HCT116 (cell line): ENCODE measurements at regions of chr16 and their contacts with region 1.

Region 1: GRCh38 chr16:72832621-72833248 is 215.2 kb downstream of the ZFHX3 start:
- DNase-seq: no peak
- ATAC-seq: peak; percentile 94
- H3K4me3 ChIP-seq: no peak overlapping the region
- H3K27ac ChIP-seq: no peak overlapping the region
- H3K4me1 ChIP-seq: peaks cover 0 to 4% of the 10 kb centered on the region in 2 experiments; a peak in 1 of 4 replicates
- H3K27me3 ChIP-seq: no peaks in the 10 kb centered on the region
- CTCF ChIP-seq: peak; percentile 76 to 99 (median 99); a peak in 5 of 6 replicates
- POLR2A ChIP-seq: no peak
- RAD21 ChIP-seq: peak; percentile 95

Region 2: DNA sequence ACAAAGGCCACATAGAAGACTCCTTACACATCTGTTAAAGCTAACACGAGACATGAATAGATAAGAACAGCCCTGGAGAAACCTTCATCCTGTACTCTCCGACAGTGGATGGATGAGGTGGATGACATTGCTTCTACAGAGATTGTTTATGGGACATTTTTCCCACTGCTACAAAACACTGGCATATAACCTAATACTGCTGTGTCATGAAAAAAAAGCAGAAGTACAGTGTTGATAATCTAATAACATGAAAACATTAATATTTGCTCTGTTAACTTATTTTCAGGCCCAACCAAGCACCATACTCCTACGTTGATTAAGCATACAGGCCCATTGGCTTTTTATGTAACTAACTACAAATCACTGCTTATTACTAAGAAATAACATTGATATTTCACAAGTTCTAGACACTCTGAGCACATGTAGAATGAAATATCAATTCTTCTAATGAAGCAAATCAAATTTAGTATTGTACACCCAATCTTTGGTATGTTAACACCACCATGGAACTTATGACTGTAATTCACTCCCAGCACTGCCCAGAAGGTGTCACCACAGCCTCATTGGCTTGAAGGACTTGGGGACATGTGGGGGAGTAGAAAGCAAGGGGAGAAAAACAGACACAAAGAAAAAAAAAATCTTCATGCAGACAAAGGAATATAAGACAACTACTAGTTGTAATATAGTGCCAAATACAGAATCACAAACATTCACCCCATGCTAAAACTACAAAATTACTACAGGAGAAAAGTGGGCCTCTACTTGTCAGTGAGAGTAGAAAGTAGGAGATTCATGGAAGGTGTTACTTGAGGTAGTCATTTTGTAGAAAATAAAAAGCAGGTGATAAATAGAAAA is 330.8 kb before region 1 on chr16:
- CTCF ChIA-PET with region 1: interaction called, 6 read pairs
- POLR2A ChIA-PET with region 1: no interaction called
- RAD21 ChIA-PET with region 1: no interaction called
- intact Hi-C with region 1: loop called (anchors 5 kb)
- DNase-seq: peak; percentile 56
- ATAC-seq: peak; percentile 93
- H3K4me3 ChIP-seq: no peak overlapping the region
- H3K27ac ChIP-seq: no peak overlapping the region
- H3K4me1 ChIP-seq: no peaks in the 10 kb centered on the region
- H3K27me3 ChIP-seq: no peaks in the 10 kb centered on the region
- CTCF ChIP-seq: peak; percentile 71 to 93 (median 85); a peak in 5 of 6 replicates
- POLR2A ChIP-seq: no peak
- RAD21 ChIP-seq: peak; percentile 93

Region 3: DNA sequence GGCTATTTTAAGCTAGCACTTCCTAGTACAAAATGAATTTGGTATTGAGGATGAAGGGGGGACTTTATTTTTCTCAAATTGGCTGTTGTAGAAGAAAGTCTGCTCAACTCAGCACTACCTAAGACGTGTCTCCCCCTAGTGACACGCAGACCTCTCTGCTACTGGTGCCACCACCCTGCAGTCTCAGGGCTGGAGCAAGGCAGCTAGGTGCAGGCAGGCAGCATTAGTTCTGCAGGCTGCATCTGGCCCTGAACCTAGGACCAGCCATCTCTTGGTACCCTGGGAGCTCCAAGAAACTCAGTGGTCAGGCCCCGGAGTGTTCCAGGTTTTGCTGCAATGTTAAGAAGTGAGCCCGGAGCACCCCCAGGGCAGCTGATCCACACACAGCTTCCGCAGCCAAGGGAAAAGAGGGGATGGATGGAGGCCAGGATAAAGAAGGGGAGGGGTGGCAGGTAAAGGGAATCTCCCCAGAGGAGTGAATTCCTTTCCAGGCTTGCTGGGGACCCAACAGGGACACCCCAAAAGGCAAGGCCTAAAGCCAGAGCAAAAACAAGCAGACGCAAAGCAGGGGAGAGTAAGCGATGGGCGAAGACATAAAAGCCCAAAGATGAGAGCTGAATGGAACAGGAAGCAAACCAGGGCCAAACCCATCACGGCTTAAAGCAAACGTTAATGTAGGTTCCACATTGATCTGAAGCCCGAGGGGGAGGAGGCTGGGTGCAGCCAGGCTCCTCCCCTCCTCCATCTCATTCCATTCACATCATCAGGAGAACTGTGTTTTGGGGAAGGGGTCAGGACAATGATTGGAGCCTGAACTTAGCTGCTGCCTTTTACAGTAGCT is 14.7 kb after region 1 on chr16:
- CTCF ChIA-PET with region 1: interaction called, 25 read pairs
- POLR2A ChIA-PET with region 1: no interaction called
- RAD21 ChIA-PET with region 1: no interaction called
- intact Hi-C with region 1: no loop called
- DNase-seq: no peak
- ATAC-seq: peak; percentile 82
- H3K4me3 ChIP-seq: no peak overlapping the region
- H3K27ac ChIP-seq: no peak overlapping the region
- H3K4me1 ChIP-seq: peaks cover 14 to 25% of the 10 kb centered on the region in 2 experiments
- H3K27me3 ChIP-seq: no peaks in the 10 kb centered on the region
- CTCF ChIP-seq: peak; percentile 47 to 65 (median 59); a peak in 5 of 6 replicates
- POLR2A ChIP-seq: no peak
- RAD21 ChIP-seq: peak; percentile 60

Region 4: DNA sequence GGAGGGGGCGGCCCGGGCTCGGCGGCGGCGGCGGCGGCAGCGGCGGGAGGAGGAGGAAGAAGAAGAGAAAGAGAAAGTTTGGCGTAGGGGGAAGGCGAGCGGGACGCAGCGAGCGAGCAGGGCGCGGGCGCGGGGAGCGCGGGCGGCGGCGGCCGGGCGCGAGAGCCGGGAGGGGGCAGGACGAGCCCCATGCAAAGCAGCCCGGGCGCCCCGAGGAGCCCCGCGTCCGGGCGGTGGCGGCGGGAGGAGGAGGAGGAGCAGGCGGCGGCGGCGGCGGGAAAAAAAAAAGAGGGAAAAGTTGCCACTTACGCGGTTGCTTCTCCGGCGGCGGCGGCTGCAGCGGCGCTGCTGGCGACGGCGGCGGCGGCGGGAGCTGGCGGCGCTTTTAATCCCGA is 225.5 kb after region 1 on chr16:
- CTCF ChIA-PET with region 1: no interaction called
- POLR2A ChIA-PET with region 1: no interaction called
- RAD21 ChIA-PET with region 1: no interaction called
- intact Hi-C with region 1: loop called (anchors 10 kb)
- DNase-seq: no peak
- ATAC-seq: peak; percentile 41
- H3K4me3 ChIP-seq: peak overlapping the region; percentile 51 to 71
- H3K27ac ChIP-seq: peak overlapping the region; percentile 64
- H3K4me1 ChIP-seq: peaks cover 36 to 51% of the 10 kb centered on the region in 2 experiments
- H3K27me3 ChIP-seq: no peaks in the 10 kb centered on the region
- CTCF ChIP-seq: no peak
- POLR2A ChIP-seq: no peak
- RAD21 ChIP-seq: no peak

Region 5: DNA sequence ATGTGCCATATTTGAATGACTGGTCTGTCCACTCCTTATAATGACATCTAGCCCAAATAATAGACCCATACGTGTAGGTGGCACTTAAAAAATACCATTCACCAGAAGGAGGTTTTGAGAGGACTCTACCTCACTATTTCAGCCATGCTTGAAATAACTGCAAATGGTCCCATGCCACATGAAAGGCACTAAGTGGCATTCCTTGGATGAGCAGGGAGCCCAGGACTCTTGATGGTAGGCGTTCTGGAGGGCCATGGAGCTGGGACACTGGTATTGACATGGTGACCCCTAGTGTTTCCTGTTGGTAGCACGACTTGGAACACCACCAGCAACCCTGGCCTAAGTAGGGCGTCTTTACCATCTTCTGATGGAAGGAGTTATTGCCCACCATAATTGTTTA is 363.9 kb after region 1 on chr16:
- CTCF ChIA-PET with region 1: interaction called, 11 read pairs
- POLR2A ChIA-PET with region 1: no interaction called
- RAD21 ChIA-PET with region 1: interaction called, 4 to 5 read pairs
- intact Hi-C with region 1: loop called (anchors 2 kb)
- DNase-seq: peak; percentile 54
- ATAC-seq: peak; percentile 96
- H3K4me3 ChIP-seq: no peak overlapping the region
- H3K27ac ChIP-seq: no peak overlapping the region
- H3K4me1 ChIP-seq: no peaks in the 10 kb centered on the region
- H3K27me3 ChIP-seq: no peaks in the 10 kb centered on the region; the same call in 1 of the 2 replicates
- CTCF ChIP-seq: peak; percentile 57 to 74 (median 71)
- POLR2A ChIP-seq: no peak
- RAD21 ChIP-seq: peak; percentile 88

Region 6: DNA sequence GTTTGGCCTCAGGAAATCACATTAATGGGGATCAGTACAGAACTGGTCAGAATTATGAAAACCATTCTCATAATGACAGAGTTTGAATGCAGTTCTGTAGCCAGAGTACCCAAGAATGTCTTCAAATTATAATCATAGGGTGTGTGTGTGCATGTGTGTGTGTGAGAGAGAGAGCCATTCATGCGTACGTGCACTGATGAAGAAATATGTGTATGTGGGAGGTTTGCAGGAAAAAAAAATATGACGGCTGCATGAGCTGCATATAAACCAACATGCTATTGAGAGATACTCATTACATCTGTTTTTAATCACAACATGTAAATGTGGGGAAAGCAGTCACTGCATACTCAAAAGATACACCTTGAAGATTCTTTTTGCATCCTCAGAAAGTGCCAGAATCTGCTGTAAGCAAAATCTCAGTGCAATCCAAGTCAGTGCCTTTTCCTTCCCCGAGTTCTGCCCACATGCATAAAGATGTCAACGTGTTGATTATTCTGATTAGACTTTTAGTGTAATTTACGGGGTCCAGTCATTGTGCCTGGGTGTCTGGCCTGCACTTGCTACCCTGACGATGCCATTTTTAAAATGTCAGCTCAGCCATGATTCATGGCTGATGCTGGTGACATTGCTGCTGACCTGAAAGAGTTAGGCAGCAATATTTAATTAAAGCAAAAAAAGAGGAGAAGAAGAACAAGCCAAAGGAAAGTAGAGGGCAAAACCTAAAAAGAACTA is 593.9 kb after region 1 on chr16:
- CTCF ChIA-PET with region 1: no interaction called
- POLR2A ChIA-PET with region 1: no interaction called
- RAD21 ChIA-PET with region 1: no interaction called
- intact Hi-C with region 1: no loop called
- DNase-seq: no peak
- ATAC-seq: no peak
- H3K4me3 ChIP-seq: no peak overlapping the region
- H3K27ac ChIP-seq: no peak overlapping the region
- H3K4me1 ChIP-seq: no peaks in the 10 kb centered on the region
- H3K27me3 ChIP-seq: peaks cover 30% of the 10 kb centered on the region
- CTCF ChIP-seq: no peak
- POLR2A ChIP-seq: no peak
- RAD21 ChIP-seq: no peak